ENCODE measurements at regions of chr3 and their contacts with region 1.

Region 1: DNA sequence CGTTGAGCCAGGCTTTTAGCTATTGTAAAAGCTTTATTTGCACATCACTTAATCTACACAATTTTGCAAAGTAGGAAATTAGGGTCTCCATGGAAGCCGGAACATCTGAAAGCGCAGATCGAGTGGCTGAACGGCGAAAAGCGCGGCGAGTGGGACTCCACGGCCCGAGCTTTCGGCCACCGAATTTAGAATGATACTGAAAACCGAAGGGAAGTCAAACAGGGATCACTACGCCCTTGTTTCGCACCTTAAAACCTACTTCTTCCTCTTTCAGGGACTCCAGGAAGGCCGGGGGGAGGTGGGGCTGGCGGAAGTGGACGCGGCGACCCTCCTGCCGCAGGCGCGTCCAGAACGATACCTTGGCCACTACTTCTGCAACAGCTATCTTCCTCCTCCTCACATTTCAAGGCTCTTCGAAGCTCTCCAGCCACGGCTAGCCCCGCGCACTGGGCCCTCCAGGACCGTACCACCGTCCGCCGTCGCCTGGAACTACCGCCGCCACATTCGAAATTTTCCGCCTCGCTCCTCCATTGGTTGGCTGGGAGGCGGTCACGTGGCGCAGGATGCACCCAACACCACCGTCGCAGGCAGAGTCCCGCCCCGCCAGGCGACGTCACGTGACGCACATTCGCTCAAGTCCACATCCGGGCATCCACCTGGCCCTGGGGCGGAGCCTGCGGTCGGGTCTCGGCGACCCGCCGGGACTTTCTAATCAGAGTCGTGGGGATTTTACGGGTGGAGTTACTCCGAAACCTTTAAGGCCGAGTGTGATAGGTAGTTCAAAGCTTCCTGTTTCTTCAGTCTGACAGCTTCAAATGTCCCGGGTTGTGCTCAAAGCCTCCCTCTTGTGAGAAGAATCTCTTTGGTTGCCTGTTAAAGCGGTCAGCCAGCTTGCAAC is at the start of gene SGO1:
- DNase-seq: peak; percentile 98 to 100 (median 99)
- ATAC-seq: peak; percentile 95
- H3K4me3 ChIP-seq: peak within 1 kb of the TSS; percentile 68
- H3K4me3 Mint-ChIP-seq: no peak within 1 kb of the TSS
- H3K27ac ChIP-seq: peak within 1 kb of the TSS; percentile 93
- H3K27ac Mint-ChIP-seq: no peak within 1 kb of the TSS
- H3K4me1 ChIP-seq: peaks cover 16 to 17% of the 10 kb centered on the region in 2 donors
- H3K4me1 Mint-ChIP-seq: peaks cover 0 to 25% (median 4%) of the 10 kb centered on the region in 7 donors
- H3K27me3 ChIP-seq: no peaks in the 10 kb centered on the region
- H3K27me3 Mint-ChIP-seq: peaks cover 0 to 2% (median 0%) of the 10 kb centered on the region in 5 donors
- total RNA-seq, gene SGO1: 0.44 to 25.0 (median 0.89) TPM

Region 2: GRCh38 chr3:19107703-19108102 is 1078.2 kb before region 1 on chr3:
- CTCF ChIA-PET with region 1: no interaction called
- POLR2A ChIA-PET with region 1: no interaction called
- intact Hi-C with region 1: loop called in 1 of 2 experiments (anchors 10 kb)
- DNase-seq: no peak
- ATAC-seq: no peak
- H3K4me3 ChIP-seq: no peak overlapping the region
- H3K4me3 Mint-ChIP-seq: no peak overlapping the region
- H3K27ac ChIP-seq: no peak overlapping the region
- H3K27ac Mint-ChIP-seq: no peak overlapping the region
- H3K4me1 ChIP-seq: no peaks in the 10 kb centered on the region
- H3K4me1 Mint-ChIP-seq: peaks cover 0 to 7% (median 0%) of the 10 kb centered on the region in 7 donors
- H3K27me3 ChIP-seq: no peaks in the 10 kb centered on the region
- H3K27me3 Mint-ChIP-seq: peaks cover 0 to 32% (median 10%) of the 10 kb centered on the region in 5 donors

Region 3: GRCh38 chr3:19885468-19885867 is 300.5 kb before region 1 on chr3:
- CTCF ChIA-PET with region 1: interaction called, 4 read pairs
- POLR2A ChIA-PET with region 1: no interaction called
- intact Hi-C with region 1: loop called (anchors 1 to 5 kb)
- DNase-seq: peak in 6 of 9 donors; percentile 14 to 32 (median 18)
- ATAC-seq: peak; percentile 72
- H3K4me3 ChIP-seq: no peak overlapping the region
- H3K4me3 Mint-ChIP-seq: no peak overlapping the region
- H3K27ac ChIP-seq: no peak overlapping the region
- H3K27ac Mint-ChIP-seq: no peak overlapping the region
- H3K4me1 ChIP-seq: no peaks in the 10 kb centered on the region
- H3K4me1 Mint-ChIP-seq: peaks cover 0 to 7% (median 0%) of the 10 kb centered on the region in 7 donors
- H3K27me3 ChIP-seq: no peaks in the 10 kb centered on the region
- H3K27me3 Mint-ChIP-seq: peaks cover 0 to 11% (median 0%) of the 10 kb centered on the region in 5 donors

Region 4: GRCh38 chr3:20104167-20104661 is 81.7 kb before region 1 on chr3:
- CTCF ChIA-PET with region 1: no interaction called
- POLR2A ChIA-PET with region 1: no interaction called
- intact Hi-C with region 1: loop called in 1 of 2 experiments (anchors 1 kb)
- DNase-seq: peak in 1 of 9 donors; percentile 35
- ATAC-seq: peak; percentile 87
- H3K4me3 ChIP-seq: no peak overlapping the region
- H3K4me3 Mint-ChIP-seq: peak overlapping the region in 5 of 10 donors; percentile 19 to 63 (median 27)
- H3K27ac ChIP-seq: peak overlapping the region; percentile 13
- H3K27ac Mint-ChIP-seq: peak overlapping the region; percentile 8 to 90 (median 54)
- H3K4me1 ChIP-seq: peaks cover 8 to 52% of the 10 kb centered on the region in 2 donors
- H3K4me1 Mint-ChIP-seq: peaks cover 6 to 72% (median 33%) of the 10 kb centered on the region in 7 donors
- H3K27me3 ChIP-seq: no peaks in the 10 kb centered on the region
- H3K27me3 Mint-ChIP-seq: no peaks in the 10 kb centered on the region

Region 5: DNA sequence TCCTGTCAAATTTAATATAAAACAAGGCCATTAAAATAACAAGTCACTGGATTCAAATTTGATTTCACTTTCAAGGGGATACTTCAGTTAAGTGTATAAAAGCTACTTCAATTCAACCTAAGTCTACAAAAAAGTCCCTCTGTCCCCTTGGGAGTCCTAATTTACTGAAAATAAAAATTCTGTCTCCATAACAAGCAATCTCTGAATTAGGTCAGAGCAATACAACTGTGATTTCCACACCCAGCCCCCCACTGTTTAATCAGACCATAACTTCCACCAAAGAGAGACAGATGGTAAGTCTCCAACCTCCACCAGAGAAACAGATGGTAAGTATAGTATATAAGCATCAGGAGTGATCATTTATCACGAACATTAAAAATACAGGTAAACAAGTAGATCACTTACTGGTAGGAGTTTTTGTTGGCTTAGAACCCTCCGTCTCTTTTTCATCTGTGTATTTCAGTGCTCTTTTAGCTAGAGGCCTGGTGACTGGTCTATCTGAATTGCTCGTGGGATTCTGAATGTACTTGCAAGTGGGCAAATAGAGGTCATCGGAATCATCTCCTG is 12.0 kb before region 1 on chr3:
- CTCF ChIA-PET with region 1: no interaction called
- POLR2A ChIA-PET with region 1: no interaction called
- intact Hi-C with region 1: loop called in 1 of 2 experiments (anchors 1 kb)
- DNase-seq: no peak
- ATAC-seq: no peak
- H3K4me3 ChIP-seq: no peak overlapping the region
- H3K4me3 Mint-ChIP-seq: no peak overlapping the region
- H3K27ac ChIP-seq: no peak overlapping the region
- H3K27ac Mint-ChIP-seq: no peak overlapping the region
- H3K4me1 ChIP-seq: no peaks in the 10 kb centered on the region
- H3K4me1 Mint-ChIP-seq: peaks cover 0 to 7% (median 0%) of the 10 kb centered on the region in 7 donors
- H3K27me3 ChIP-seq: no peaks in the 10 kb centered on the region
- H3K27me3 Mint-ChIP-seq: peaks cover 0 to 3% (median 0%) of the 10 kb centered on the region in 5 donors

Region 6: DNA sequence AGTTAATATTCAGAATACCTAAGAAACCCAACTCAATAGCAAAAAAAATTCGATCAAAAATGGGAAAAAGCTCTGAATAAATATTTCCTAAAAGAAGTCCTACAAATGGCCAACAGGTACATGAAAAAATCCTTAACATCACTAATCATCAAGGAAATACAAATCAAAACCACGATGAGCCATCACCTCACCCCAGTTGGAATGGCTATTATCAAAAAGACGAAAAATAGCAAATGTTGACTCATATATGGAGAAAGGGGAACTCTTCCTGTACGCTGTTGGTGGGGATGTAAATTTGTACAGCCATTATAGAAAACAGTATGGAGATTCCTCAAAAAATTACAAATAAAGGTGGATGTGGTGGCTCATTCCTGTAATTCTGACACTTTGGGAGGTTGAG is 29.7 kb after region 1 on chr3:
- CTCF ChIA-PET with region 1: no interaction called
- POLR2A ChIA-PET with region 1: no interaction called
- intact Hi-C with region 1: no loop called
- DNase-seq: no peak
- ATAC-seq: no peak
- H3K4me3 ChIP-seq: no peak overlapping the region
- H3K4me3 Mint-ChIP-seq: no peak overlapping the region
- H3K27ac ChIP-seq: no peak overlapping the region
- H3K27ac Mint-ChIP-seq: no peak overlapping the region
- H3K4me1 ChIP-seq: no peaks in the 10 kb centered on the region
- H3K4me1 Mint-ChIP-seq: no peaks in the 10 kb centered on the region
- H3K27me3 ChIP-seq: no peaks in the 10 kb centered on the region
- H3K27me3 Mint-ChIP-seq: peaks cover 0 to 7% (median 0%) of the 10 kb centered on the region in 5 donors

Region 7: DNA sequence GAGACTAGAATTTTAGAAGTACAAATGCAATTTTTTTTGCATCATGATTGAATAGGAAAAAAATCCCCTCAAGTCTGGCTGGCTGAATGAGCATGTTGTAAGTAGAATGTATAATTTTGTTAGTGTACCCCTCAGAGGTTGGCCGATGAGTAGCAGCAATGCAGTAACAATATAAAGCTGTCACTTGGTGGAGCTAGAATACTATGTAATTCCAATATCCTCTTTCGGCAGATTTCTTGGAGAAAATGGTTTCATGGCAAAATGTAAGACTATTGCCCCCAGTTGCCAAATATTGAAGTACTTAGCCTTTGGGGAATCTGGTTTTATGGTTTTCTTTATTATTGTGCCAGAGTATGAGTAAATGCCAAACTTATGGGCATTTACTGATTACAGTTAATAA is 39.8 kb after region 1 on chr3:
- CTCF ChIA-PET with region 1: no interaction called
- POLR2A ChIA-PET with region 1: no interaction called
- intact Hi-C with region 1: no loop called
- DNase-seq: peak in 1 of 9 donors; percentile 0
- ATAC-seq: no peak
- H3K4me3 ChIP-seq: no peak overlapping the region
- H3K4me3 Mint-ChIP-seq: no peak overlapping the region
- H3K27ac ChIP-seq: no peak overlapping the region
- H3K27ac Mint-ChIP-seq: no peak overlapping the region
- H3K4me1 ChIP-seq: no peaks in the 10 kb centered on the region
- H3K4me1 Mint-ChIP-seq: no peaks in the 10 kb centered on the region
- H3K27me3 ChIP-seq: no peaks in the 10 kb centered on the region
- H3K27me3 Mint-ChIP-seq: peaks cover 0 to 19% (median 0%) of the 10 kb centered on the region in 5 donors

Region 8: DNA sequence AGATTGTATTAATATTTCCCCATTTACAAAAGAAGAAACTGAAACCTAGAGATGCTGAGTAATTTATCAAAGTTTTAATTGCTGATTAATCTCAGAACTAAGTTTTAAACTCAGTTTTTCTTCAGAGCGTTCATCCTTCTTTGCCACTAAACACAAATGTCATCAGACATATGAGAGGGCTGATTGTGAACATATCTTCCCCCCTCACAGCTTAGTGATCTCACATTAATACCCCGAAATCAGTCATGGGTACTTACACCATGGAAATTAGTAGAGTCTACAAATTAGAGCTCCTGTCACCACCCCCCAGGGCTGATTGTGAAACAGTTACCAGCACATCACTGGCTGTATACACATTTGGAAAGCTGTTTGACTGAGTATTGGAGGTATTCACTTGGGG is 189.4 kb after region 1 on chr3:
- CTCF ChIA-PET with region 1: no interaction called
- POLR2A ChIA-PET with region 1: no interaction called
- intact Hi-C with region 1: no loop called
- DNase-seq: no peak
- ATAC-seq: no peak
- H3K4me3 ChIP-seq: no peak overlapping the region
- H3K4me3 Mint-ChIP-seq: no peak overlapping the region
- H3K27ac ChIP-seq: no peak overlapping the region
- H3K27ac Mint-ChIP-seq: no peak overlapping the region
- H3K4me1 ChIP-seq: no peaks in the 10 kb centered on the region
- H3K4me1 Mint-ChIP-seq: no peaks in the 10 kb centered on the region
- H3K27me3 ChIP-seq: no peaks in the 10 kb centered on the region
- H3K27me3 Mint-ChIP-seq: no peaks in the 10 kb centered on the region